ENCODE measurements at regions of chr7 and their contacts with region 1.

Region 1: DNA sequence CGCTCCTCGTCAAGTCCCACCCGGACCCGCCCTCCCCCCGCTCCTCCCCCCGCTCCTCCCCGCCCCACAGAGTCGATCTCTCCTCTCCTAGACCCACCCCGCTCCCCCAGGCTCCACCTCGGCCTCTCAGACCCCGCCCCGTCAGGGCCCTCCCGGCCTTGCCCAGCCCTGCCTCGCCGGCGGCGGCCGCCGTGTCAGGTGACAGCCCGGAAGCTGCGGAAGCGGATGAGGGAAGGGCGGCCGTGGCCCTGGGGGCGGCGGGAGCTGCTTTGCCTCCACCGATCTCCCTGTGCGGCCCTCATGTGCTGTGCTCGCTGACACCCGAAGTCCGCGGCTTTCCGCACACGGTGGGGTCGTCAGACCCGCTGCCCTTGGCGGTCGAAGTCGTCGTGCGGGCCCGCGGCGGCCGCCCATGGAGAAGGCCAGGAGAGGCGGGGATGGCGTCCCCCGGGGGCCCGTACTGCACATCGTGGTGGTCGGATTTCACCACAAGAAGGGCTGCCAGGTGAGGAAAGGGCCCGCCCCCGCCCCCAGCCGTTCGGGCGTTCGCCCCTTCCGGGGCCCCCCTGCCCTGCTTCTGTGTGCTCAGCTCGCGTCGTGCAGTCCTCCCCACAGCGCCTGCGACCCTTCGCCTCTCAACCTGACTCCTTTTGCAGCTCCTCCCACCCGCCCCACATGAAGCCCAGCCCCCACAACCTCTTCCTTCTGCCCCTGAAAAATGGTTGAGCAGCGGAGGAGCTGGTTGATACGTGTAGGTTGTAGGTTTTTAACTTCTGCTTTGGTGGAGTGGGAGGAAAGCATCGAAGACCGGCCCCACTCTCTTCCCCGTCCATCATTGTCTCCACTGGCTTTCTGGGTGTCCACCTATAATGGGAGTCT is at the start of gene AVL9:
- DNase-seq: peak; percentile 99 to 100
- ATAC-seq: peak; percentile 100
- H3K4me3 ChIP-seq: peak within 1 kb of the TSS; percentile 79 to 93
- H3K27ac ChIP-seq: peak within 1 kb of the TSS; percentile 77 to 89
- H3K4me1 ChIP-seq: no peaks in the 10 kb centered on the region
- H3K27me3 ChIP-seq: no peaks in the 10 kb centered on the region
- total RNA-seq, gene AVL9: 35.8 to 37.5 TPM

Region 2: DNA sequence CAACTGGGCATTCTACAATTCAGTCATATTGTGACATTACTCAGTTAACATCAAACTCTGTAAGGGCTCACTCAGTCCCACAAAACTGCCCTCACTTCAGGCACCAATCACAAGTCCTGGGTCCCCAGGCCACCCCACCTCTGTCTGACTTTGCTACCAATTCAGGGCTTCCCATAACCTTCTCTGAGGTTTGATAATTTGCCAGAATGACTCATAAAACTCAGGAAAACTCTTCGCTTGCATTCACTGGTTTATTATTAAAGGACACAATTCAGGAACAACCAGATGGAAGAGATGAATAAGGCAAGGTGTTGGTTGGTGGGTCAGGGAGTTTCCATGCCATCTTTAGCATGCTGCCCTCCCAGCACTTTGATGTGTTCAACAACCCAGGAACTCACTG is 41.0 kb after region 1 on chr7:
- intact Hi-C with region 1: loop called in 1 of 2 experiments (anchors 5 kb)
- DNase-seq: no peak
- ATAC-seq: peak; percentile 38
- H3K4me3 ChIP-seq: no peak overlapping the region
- H3K27ac ChIP-seq: no peak overlapping the region
- H3K4me1 ChIP-seq: peaks cover 0 to 6% of the 10 kb centered on the region in 2 donors
- H3K27me3 ChIP-seq: no peaks in the 10 kb centered on the region

Region 3: DNA sequence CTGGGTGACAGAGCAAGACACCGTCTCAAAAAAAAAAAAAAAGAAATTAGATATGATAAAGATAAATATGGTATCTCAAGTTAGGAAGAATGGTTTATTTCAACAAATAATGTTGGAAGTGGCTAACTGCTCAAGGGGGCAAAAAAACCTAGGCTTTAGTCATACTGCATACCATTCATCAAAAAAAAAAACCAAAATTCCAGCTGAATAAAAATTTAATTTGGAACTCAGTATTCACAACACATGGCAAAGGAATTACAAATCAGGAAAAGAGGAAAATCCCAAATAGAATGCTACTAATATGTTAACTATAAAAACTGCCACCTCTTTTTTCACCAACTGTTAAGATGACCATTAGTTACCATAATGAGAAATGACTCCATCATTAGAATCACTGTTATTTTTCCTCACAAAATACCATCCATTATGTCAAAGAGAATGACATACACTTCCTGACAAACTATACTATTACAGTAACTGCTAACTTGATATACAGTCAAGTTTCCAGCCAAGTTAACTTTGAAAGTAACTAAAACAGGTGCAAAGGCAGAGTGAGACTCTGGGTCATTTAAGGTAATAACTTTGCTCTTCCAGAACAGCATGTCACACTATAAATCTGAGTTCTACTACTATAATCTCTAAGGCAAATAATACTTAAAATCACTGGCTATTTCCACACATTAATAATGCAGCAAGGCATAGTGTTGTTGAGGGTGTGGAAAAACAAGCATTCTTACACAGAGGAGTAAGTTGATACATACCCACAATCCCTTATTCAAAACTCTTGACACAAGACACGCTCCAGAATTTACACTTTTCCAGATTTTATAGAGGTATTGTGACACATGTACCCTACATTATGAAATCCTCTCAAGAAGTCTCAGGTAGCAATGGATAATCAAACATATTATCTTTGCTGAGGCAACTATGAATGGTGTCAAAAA is 385.8 kb after region 1 on chr7:
- intact Hi-C with region 1: loop called in 1 of 2 experiments (anchors 10 kb)
- DNase-seq: no peak
- ATAC-seq: no peak
- H3K4me3 ChIP-seq: no peak overlapping the region
- H3K27ac ChIP-seq: no peak overlapping the region
- H3K4me1 ChIP-seq: no peaks in the 10 kb centered on the region
- H3K27me3 ChIP-seq: no peaks in the 10 kb centered on the region

Region 4: DNA sequence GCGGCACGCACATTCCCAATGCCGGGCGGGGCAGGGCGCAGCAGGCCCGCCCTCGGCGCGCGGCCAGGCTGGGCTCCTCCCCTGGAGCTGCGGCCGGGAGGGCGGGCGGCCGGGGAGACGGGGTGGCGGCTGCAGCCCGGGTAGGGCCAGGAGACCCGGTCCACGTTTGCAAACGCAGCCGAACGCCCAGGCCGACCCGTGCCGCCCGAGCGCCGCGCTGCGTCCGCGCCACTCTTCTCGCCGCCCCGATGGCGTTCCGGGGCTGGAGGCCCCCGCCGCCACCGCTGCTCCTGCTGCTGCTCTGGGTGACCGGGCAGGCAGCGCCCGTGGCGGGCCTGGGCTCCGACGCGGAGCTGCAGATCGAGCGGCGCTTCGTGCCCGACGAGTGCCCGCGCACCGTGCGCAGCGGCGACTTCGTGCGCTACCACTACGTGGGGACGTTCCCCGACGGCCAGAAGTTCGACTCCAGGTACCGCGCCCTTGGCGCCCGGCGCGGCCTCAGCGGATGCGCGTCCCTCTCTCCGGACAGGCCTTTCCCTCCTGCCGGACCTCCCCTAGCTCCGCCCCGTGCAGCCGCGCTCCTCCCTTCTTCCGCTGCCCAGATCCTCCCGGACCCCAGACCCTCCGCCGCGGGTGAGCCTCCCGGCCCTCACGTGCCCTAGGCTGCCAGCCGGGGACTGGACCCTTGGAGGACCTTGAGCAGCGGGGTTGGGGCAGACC is 461.9 kb after region 1 on chr7 and contains the start of gene FKBP9:
- intact Hi-C with region 1: loop called in 1 of 2 experiments (anchors 5 kb)
- DNase-seq: peak; percentile 91 to 95
- ATAC-seq: peak; percentile 96
- H3K4me3 ChIP-seq: peak within 1 kb of the TSS; percentile 68 to 69
- H3K27ac ChIP-seq: peak within 1 kb of the TSS in 1 of 2 donors; percentile 22
- H3K4me1 ChIP-seq: no peaks in the 10 kb centered on the region
- H3K27me3 ChIP-seq: no peaks in the 10 kb centered on the region
- total RNA-seq, gene FKBP9: 122 to 193 TPM

Region 5: DNA sequence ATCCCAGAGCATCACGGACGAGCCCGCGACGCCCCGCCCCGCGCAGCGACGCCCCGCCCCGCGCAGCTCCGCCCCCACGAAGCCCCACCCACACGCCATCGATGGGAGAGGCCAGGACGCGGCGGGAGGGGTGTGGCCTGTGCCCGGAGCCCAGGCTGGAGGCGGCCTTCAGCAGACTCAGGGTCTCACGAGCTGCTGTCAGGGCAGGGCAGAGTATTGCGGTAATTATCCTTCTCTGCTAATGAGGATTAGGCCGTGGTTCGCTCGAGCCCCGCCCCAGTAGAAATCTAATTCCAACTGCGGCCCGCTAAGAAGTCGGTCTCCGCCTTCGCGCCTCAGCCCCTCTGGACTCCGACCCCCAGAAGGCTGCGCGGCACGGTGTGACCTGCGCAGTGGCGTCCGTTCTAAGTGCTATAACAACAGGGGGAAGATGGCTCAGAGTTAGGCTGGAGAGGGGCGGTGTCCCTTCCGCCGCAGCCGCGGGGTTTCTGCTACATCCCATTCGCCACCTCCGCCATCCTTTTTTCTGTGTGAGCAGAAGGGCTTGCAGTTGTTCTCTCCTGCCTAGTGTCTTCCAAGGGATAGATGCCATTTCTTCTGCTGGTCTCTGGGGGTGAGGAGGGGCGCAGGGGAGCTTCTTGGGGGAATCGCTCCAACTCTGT is 567.4 kb after region 1 on chr7:
- intact Hi-C with region 1: loop called in 1 of 2 experiments (anchors 10 kb)
- DNase-seq: peak; percentile 95 to 98
- ATAC-seq: peak; percentile 100
- H3K4me3 ChIP-seq: peak overlapping the region; percentile 22 to 50
- H3K27ac ChIP-seq: peak overlapping the region in 1 of 2 donors; percentile 70
- H3K4me1 ChIP-seq: peaks cover 0 to 3% of the 10 kb centered on the region in 2 donors
- H3K27me3 ChIP-seq: no peaks in the 10 kb centered on the region

Region 6: DNA sequence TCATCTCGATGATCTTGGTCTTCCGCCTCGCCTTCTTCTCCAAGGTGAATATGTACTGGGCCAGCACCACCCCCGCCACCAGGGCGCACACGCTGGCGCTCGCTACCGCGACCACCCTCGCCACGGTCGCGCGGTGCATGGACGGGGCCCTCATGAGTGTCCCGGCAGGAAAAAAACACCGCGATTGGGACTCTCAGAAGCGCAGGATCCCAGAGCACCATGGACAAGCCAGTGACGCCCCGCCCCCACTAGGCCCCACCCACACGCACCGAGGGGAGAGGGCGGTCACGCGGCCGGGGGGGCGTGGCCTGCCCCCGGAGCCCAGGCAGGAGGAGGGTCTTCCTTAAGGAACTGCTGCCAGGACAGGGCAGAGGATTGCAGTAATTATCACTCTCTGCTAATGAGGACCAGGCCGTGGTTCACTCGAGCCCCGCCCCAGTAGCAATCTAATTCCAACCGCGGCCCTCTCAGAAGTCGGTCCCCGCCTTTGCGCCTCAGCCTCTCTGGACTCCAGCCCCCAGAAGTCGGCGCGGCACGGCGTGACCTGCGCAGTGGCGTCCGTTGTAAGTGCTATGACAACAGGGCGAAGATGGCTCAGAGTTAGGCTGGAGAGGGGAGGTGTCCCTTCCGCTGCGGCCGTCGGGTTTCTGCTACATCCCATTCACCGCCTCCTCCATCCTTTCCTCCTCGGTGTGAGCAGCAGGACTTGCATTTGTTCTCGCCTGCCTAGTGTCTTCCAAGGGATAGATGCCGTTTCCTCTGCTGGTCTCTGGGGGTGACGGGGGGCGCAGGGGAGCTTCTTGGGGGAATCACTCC is 633.7 kb after region 1 on chr7 and contains the start of gene BBS9:
- intact Hi-C with region 1: loop called in 1 of 2 experiments (anchors 10 kb)
- DNase-seq: peak; percentile 96 to 97
- ATAC-seq: peak; percentile 100
- H3K4me3 ChIP-seq: peak within 1 kb of the TSS; percentile 52 to 71
- H3K27ac ChIP-seq: peak within 1 kb of the TSS in 1 of 2 donors; percentile 49
- H3K4me1 ChIP-seq: peaks cover 0 to 7% of the 10 kb centered on the region in 2 donors
- H3K27me3 ChIP-seq: no peaks in the 10 kb centered on the region
- total RNA-seq, gene BBS9: 19.9 to 37.2 TPM

Measured in aorta (tissue), 5 donors.